ENCODE measurements at regions of chr2 and their contacts with region 1.

Region 1: GRCh38 chr2:143259368-143259958 is 130.2 kb downstream of the ARHGAP15 start:
- DNase-seq: peak; percentile 39 to 61
- H3K4me3 ChIP-seq: no peak overlapping the region
- H3K27ac ChIP-seq: no peak overlapping the region
- H3K4me1 ChIP-seq: peaks cover 0 to 4% (median 0%) of the 10 kb centered on the region in 4 experiments; a peak in 1 of 7 replicates
- H3K27me3 ChIP-seq: peaks cover 0 to 1% (median 0%) of the 10 kb centered on the region in 4 experiments; a peak in 1 of 7 replicates
- CTCF ChIP-seq: peak in 2 of 3 experiments; percentile 65 to 76; a peak in 3 of 4 replicates
- EP300 ChIP-seq: no peak
- POLR2A ChIP-seq: no peak
- RAD21 ChIP-seq: peak; percentile 83 to 88

Region 2: DNA sequence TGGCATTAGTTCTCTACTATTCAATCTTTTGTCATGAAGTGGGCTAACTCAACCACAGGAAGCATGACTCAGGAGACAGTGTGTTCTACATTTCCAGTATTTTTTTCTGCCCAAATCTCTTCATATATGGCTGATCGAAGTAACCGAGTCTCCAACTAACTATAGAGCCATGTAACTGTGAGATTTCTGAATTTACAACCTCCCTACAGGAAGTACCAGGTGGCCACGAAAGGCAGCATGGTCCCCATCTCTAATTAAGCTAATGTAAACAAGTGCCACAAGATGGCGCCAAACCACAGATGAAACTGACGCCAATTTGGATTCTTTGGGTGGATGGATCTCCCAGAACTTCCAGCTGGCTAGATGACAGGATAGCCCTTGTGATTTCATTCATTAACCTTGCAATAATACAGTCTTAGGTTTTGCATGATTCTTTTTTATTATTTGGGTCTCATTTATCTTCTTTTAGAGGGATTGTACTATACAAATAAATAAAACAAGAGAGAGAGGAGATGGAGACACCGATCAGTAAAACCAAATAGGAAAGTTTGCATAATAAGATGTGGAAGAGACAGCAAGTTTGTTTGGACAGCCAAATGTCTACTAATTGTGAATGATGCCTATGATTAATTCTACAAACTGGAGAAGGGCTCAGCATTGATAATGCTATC is 148.6 kb before region 1 on chr2:
- CTCF ChIA-PET with region 1: interaction called, 39 read pairs
- POLR2A ChIA-PET with region 1: no interaction called
- DNase-seq: peak; percentile 34 to 66
- H3K4me3 ChIP-seq: no peak overlapping the region
- H3K27ac ChIP-seq: no peak overlapping the region
- H3K4me1 ChIP-seq: no peaks in the 10 kb centered on the region
- H3K27me3 ChIP-seq: no peaks in the 10 kb centered on the region
- CTCF ChIP-seq: peak; percentile 26 to 77 (median 76)
- EP300 ChIP-seq: no peak
- POLR2A ChIP-seq: no peak
- RAD21 ChIP-seq: peak; percentile 85 to 88

Region 3: GRCh38 chr2:143205106-143205764 is 54.2 kb before region 1 on chr2:
- CTCF ChIA-PET with region 1: interaction called, 43 read pairs
- POLR2A ChIA-PET with region 1: no interaction called
- DNase-seq: no peak
- H3K4me3 ChIP-seq: no peak overlapping the region
- H3K27ac ChIP-seq: no peak overlapping the region
- H3K4me1 ChIP-seq: no peaks in the 10 kb centered on the region
- H3K27me3 ChIP-seq: no peaks in the 10 kb centered on the region
- CTCF ChIP-seq: peak in 2 of 3 experiments; percentile 19 to 36; a peak in 2 of 4 replicates
- EP300 ChIP-seq: no peak
- POLR2A ChIP-seq: no peak
- RAD21 ChIP-seq: peak in 1 of 2 experiments; percentile 31

Region 4: DNA sequence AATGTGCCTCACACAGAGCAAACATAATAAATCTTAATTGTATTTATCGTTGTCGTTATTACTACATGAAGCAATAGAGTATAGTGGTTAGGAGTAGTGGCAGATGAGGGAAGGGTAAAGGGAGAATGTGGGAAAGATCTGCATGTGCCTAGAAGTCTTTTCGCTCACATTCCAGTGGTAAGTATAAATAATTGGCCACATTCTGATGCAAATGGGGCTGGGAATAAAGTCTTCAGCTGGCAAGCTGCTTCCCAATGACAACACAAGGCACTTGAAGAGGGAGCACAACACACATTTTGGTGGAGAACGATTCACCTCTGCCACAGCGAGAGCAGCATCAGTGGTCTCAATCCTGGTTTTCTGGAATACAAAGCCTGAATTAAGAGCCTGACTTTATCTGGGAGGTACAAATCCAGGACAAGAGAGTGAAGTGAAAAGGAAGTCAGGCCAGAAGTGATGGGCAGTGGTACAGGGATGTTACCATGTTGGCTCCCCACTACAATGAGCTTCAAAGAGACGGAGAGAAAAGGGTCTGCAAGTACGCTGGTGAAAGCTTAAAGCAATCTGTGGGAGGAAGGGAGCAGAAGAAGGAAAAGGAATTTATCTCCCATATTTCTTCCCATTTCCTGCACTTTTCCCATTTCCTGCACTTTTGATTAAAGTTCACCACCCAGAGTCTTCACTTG is 17.9 kb before region 1 on chr2:
- CTCF ChIA-PET with region 1: interaction called, 32 read pairs
- POLR2A ChIA-PET with region 1: interaction called, 5 read pairs
- DNase-seq: peak in 1 of 2 experiments; percentile 39
- H3K4me3 ChIP-seq: peak overlapping the region in 1 of 4 experiments; percentile 13; a peak in 3 of 8 replicates
- H3K27ac ChIP-seq: no peak overlapping the region
- H3K4me1 ChIP-seq: peaks cover 0 to 9% (median 5%) of the 10 kb centered on the region in 4 experiments; a peak in 3 of 7 replicates
- H3K27me3 ChIP-seq: no peaks in the 10 kb centered on the region
- CTCF ChIP-seq: no peak; a peak in 1 of 4 replicates
- EP300 ChIP-seq: peak in 1 of 2 experiments; percentile 61; a peak in 1 of 3 replicates
- POLR2A ChIP-seq: no peak; a peak in 1 of 3 replicates
- RAD21 ChIP-seq: no peak

Region 5: GRCh38 chr2:143284087-143284675 is 24.7 kb after region 1 on chr2:
- CTCF ChIA-PET with region 1: interaction called, 19 read pairs
- POLR2A ChIA-PET with region 1: no interaction called
- DNase-seq: no peak
- H3K4me3 ChIP-seq: no peak overlapping the region
- H3K27ac ChIP-seq: no peak overlapping the region
- H3K4me1 ChIP-seq: no peaks in the 10 kb centered on the region
- H3K27me3 ChIP-seq: no peaks in the 10 kb centered on the region
- CTCF ChIP-seq: peak; percentile 60 to 77 (median 63)
- EP300 ChIP-seq: no peak
- POLR2A ChIP-seq: no peak
- RAD21 ChIP-seq: peak; percentile 44 to 62

Region 6: GRCh38 chr2:143329288-143329687 is 69.8 kb after region 1 on chr2:
- CTCF ChIA-PET with region 1: no interaction called
- POLR2A ChIA-PET with region 1: no interaction called
- DNase-seq: no peak
- H3K4me3 ChIP-seq: no peak overlapping the region
- H3K27ac ChIP-seq: no peak overlapping the region
- H3K4me1 ChIP-seq: no peaks in the 10 kb centered on the region
- H3K27me3 ChIP-seq: no peaks in the 10 kb centered on the region
- CTCF ChIP-seq: no peak
- EP300 ChIP-seq: no peak
- POLR2A ChIP-seq: no peak
- RAD21 ChIP-seq: no peak

Measured in H1 (cell line).